ENCODE measurements at regions of chr7 and their contacts with region 1.

Region 1: DNA sequence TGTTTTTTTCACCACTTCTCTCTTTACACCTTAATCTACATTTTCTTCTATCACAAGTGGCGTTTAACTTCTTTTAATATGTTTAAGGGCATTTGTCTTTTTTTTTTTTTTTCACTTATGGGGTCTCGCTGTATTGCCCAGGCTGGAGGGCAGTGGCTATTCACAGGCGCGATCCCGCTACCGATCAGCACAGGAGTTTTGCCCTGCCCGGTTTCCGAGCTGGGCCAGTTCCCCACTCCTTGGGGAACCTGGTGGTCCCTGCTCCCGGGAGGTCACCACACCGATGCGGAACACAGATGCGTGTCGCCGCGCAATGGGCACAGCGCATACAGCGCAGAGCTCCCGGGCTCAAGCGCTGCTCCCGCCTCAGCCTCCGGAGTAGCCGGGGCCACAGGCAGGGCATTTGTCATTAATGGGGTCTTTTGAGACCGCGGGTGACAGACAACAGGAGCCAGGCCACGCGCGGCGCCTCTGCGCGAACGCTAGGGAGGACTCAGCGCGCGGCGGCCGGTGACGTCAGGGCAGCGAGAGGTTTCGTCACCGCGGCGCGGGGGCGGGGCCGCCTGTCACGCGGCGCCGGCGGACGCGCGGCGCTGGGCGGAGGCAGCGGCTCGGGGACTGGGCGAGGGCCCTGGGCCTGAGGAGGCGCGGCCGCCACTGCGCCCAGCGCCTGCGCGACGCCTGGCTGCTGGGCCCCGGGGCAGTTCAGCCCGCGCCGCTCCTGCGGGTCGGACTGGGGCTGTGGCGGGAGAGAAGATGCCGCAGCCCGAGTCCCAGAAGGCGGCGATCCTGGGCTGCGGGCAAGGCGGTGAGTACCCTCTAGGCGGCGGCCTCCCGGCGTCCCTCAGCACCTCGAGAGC is at the start of gene GALNT11:
- DNase-seq: peak; percentile 52 to 92
- H3K4me3 ChIP-seq: peak within 1 kb of the TSS; percentile 71 to 94
- H3K27ac ChIP-seq: peak within 1 kb of the TSS; percentile 79 to 84
- H3K4me1 ChIP-seq: peaks cover 5 to 6% of the 10 kb centered on the region in 2 donors
- H3K27me3 ChIP-seq: no peaks in the 10 kb centered on the region
- CTCF ChIP-seq: peak in 2 of 3 experiments; percentile 19 to 43
- total RNA-seq, gene GALNT11: 146 TPM

Region 2: GRCh38 chr7:151876899-151877777 is 148.2 kb before region 1 on chr7 and contains the start of gene PRKAG2:
- intact Hi-C with region 1: loop called (anchors 2 kb)
- DNase-seq: peak in 1 of 2 donors; percentile 87
- H3K4me3 ChIP-seq: peak within 1 kb of the TSS; percentile 93 to 95
- H3K27ac ChIP-seq: peak within 1 kb of the TSS; percentile 76 to 78
- H3K4me1 ChIP-seq: peaks cover 5 to 18% of the 10 kb centered on the region in 2 donors
- H3K27me3 ChIP-seq: no peaks in the 10 kb centered on the region
- CTCF ChIP-seq: peak in 1 of 3 experiments; percentile 3
- total RNA-seq, gene PRKAG2: 26.7 TPM

Region 3: GRCh38 chr7:151968357-151968756 is 57.0 kb before region 1 on chr7:
- intact Hi-C with region 1: no loop called
- DNase-seq: peak in 1 of 2 donors; percentile 75
- H3K4me3 ChIP-seq: no peak overlapping the region
- H3K27ac ChIP-seq: no peak overlapping the region
- H3K4me1 ChIP-seq: no peaks in the 10 kb centered on the region
- H3K27me3 ChIP-seq: no peaks in the 10 kb centered on the region
- CTCF ChIP-seq: no peak

Region 4: DNA sequence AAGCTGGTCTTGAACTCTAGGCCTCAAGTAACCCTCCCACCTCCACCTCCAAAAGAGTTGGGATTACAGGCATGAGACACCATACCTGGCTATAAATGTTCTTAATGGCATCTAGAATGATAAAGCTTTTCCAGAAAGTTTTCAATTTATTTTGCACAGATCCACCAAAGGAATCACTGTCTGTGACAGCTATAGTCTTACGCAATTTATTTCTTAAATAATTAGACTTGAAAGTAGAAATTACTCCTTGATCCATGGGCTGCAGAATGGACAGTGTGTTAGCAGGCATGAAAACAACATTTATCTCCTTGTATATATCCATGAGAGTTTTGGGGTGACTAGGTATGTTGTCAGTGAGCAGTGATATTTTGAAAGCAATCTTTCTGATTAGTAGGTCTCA is 34.0 kb after region 1 on chr7:
- intact Hi-C with region 1: loop called (anchors 2 kb)
- DNase-seq: no peak
- H3K4me3 ChIP-seq: no peak overlapping the region
- H3K27ac ChIP-seq: no peak overlapping the region
- H3K4me1 ChIP-seq: no peaks in the 10 kb centered on the region
- H3K27me3 ChIP-seq: no peaks in the 10 kb centered on the region
- CTCF ChIP-seq: no peak

Region 5: DNA sequence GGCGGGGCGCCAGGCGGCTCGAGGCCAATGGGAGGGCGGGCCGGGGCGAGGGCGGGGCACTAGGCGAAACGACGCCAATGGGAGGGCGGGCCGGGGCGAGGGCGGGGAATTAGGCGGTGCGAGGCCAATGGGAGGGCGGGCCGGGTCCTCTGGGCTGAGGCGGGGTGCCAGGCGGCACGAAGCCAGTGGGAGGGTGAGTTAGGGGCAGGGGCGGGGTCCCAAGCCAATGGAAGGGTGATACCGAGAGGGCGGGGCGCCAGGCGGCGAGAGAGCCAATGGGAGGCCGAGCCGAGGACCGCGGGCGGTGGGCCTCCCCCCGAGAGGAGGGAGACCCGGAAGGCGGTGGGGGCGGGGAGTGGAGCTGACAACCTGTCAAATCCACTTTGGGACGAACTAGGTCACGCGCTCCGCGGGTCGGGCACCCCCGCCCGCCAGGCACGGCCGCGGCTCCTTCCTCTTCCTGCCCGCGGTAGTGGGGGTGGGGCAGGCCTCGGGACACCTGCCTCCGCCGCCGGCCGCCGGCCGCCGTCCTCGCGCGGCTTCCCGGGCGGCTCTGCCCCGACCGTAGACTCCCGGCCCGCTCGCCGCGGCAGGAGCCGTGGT is 438.5 kb after region 1 on chr7:
- intact Hi-C with region 1: loop called (anchors 10 kb)
- DNase-seq: peak; percentile 99 to 100
- H3K4me3 ChIP-seq: peak overlapping the region; percentile 92 to 97
- H3K27ac ChIP-seq: peak overlapping the region; percentile 99 to 100
- H3K4me1 ChIP-seq: peaks cover 0 to 12% of the 10 kb centered on the region in 2 donors
- H3K27me3 ChIP-seq: no peaks in the 10 kb centered on the region
- CTCF ChIP-seq: no peak

Region 6: DNA sequence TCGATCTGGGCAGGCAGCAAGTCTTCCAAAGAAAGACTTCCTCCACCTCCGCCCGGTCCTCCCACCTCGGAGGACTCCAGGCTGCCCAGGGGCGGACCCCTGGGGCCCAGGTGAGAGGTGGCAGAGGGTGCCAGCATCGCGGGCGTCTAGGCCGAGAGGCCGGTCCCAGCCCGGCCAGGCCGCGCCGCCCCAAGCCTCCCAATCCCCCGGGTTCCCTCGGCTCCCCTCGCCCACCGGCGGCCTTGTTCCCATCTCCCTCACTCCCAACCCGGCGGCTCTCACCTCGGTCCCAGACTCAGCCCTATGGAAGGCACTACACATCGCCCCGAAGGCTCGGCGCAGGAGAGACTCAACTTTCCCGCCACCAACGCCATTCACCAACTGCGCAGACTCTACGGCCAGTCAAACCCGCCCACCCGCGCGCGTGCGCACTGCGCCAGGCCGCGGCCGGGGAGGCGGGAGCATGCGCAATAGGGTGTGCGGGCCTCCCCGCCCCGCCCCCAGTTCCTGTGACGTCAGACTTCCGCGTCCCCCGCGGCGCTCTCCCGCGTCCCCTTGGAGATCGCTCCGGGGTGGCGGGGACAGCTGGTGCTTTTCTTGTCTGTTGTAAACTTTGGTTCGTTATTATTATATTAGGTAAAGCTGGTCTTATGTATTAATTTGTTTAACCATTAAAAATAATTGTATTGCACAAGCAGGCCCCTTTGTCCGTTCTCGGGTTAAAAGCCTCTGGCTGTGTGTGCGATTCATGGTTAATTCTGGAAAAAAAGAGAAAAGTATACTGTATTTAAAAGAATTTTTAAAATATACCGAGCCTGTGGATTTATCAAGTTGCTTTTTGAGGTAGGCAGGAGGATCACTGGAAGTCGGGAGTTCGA is 650.7 kb after region 1 on chr7 and contains the start of gene XRCC2:
- intact Hi-C with region 1: loop called (anchors 2 kb)
- DNase-seq: peak; percentile 66 to 95
- H3K4me3 ChIP-seq: peak within 1 kb of the TSS; percentile 83 to 89
- H3K27ac ChIP-seq: peak within 1 kb of the TSS; percentile 63 to 83
- H3K4me1 ChIP-seq: peaks cover 0 to 7% of the 10 kb centered on the region in 2 donors
- H3K27me3 ChIP-seq: no peaks in the 10 kb centered on the region
- CTCF ChIP-seq: no peak
- total RNA-seq, gene XRCC2: 0.11 TPM

Region 7: DNA sequence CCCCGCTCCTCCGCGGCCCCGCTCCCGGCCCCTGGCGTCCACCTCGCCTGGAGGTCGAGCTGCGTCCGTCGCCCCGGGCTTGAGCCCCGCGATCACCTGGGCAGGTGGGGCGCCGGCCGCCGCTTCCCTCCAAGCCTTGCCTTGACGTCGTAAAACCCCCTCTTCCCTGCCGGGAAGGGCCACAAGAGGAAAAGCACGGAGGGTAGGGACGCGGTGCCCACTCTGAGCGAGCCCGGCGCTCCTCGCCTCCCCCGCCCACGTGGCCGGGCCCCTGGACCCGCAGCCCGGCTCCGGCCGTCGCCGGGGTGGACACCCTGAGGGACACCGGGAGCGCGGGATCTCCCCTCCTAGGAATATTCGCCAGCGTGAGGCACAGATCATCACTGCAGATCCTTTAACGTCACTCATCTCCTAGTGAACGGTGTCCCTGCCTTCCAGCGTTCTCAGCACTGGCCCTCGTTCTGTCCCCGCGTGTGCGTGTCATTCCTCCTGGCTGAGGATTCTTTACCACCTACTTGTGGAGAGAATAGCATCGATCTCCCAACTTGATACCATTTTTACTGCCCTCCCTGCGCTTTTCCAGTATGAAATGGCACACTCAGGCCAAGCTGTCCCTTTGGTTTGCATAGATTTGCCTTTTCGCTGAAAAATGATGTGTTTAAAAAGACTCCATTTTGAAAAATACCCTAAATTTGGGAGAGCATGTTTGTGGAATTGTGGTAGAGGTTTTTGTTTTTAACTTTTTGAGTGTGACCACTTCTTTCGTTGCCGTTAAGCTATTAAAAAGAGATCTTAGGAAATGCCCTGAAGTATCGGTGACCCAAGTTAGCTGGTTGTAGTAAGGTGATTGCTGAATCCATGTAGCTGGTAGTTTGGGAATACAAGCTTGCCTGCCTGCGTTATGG is 734.9 kb after region 1 on chr7:
- intact Hi-C with region 1: loop called (anchors 5 kb)
- DNase-seq: peak in 1 of 2 donors; percentile 65
- H3K4me3 ChIP-seq: peak overlapping the region; percentile 95 to 99
- H3K27ac ChIP-seq: peak overlapping the region; percentile 95 to 96
- H3K4me1 ChIP-seq: peaks cover 0 to 2% of the 10 kb centered on the region in 2 donors
- H3K27me3 ChIP-seq: no peaks in the 10 kb centered on the region
- CTCF ChIP-seq: no peak

Measured in ascending aorta (tissue), 2 donors.